ENCODE measurements at regions of chr11 and their contacts with region 1.

Region 1: GRCh38 chr11:88779577-88779976 is 286.2 kb downstream of the GRM5 start:
- DNase-seq: no peak
- ATAC-seq: no peak
- H3K4me3 ChIP-seq: no peak overlapping the region
- H3K4me3 Mint-ChIP-seq: no peak overlapping the region
- H3K27ac ChIP-seq: no peak overlapping the region
- H3K27ac Mint-ChIP-seq: no peak overlapping the region
- H3K4me1 ChIP-seq: no peaks in the 10 kb centered on the region
- H3K4me1 Mint-ChIP-seq: peaks cover 4% of the 10 kb centered on the region
- H3K27me3 ChIP-seq: no peaks in the 10 kb centered on the region
- H3K27me3 Mint-ChIP-seq: no peaks in the 10 kb centered on the region
- CTCF ChIP-seq: no peak

Region 2: GRCh38 chr11:88680806-88681205 is 98.8 kb before region 1 on chr11:
- CTCF ChIA-PET with region 1: no interaction called
- POLR2A ChIA-PET with region 1: no interaction called
- intact Hi-C with region 1: loop called in 1 of 2 experiments (anchors 10 kb)
- DNase-seq: no peak
- ATAC-seq: no peak
- H3K4me3 ChIP-seq: no peak overlapping the region
- H3K4me3 Mint-ChIP-seq: no peak overlapping the region
- H3K27ac ChIP-seq: no peak overlapping the region
- H3K27ac Mint-ChIP-seq: no peak overlapping the region
- H3K4me1 ChIP-seq: no peaks in the 10 kb centered on the region
- H3K4me1 Mint-ChIP-seq: peaks cover 6% of the 10 kb centered on the region
- H3K27me3 ChIP-seq: no peaks in the 10 kb centered on the region
- H3K27me3 Mint-ChIP-seq: no peaks in the 10 kb centered on the region
- CTCF ChIP-seq: no peak

Region 3: DNA sequence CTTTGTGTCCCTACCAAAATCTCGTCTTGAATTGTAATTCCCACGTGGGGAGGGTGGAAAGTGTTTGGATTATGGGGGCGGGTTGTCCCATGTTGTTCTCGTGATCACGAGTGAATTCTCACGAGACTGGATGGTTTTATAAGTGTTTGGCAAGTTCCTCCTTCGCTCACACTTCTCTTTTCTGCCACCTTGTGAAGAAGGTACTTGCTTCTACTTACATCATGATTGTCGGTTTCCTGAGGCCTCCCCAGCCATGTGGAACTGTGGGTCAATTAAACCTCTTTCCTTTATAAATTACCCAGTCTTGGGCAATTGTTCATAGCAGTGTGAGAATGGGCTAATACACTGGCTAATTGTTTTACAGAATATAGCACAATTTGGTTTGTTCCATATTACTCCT is 40.1 kb before region 1 on chr11:
- CTCF ChIA-PET with region 1: no interaction called
- POLR2A ChIA-PET with region 1: no interaction called
- intact Hi-C with region 1: loop called in 1 of 2 experiments (anchors 1 kb)
- DNase-seq: no peak
- ATAC-seq: no peak
- H3K4me3 ChIP-seq: no peak overlapping the region
- H3K4me3 Mint-ChIP-seq: no peak overlapping the region
- H3K27ac ChIP-seq: no peak overlapping the region
- H3K27ac Mint-ChIP-seq: no peak overlapping the region
- H3K4me1 ChIP-seq: no peaks in the 10 kb centered on the region
- H3K4me1 Mint-ChIP-seq: no peaks in the 10 kb centered on the region
- H3K27me3 ChIP-seq: no peaks in the 10 kb centered on the region
- H3K27me3 Mint-ChIP-seq: no peaks in the 10 kb centered on the region
- CTCF ChIP-seq: no peak